Mammary epithelial cell (primary cell): ENCODE measurements at regions of chr7 and their contacts with region 1.

Region 1: GRCh38 chr7:82559193-82559805 is 115.7 kb upstream of the CACNA2D1 start:
- DNase-seq: peak; percentile 40
- H3K4me3 ChIP-seq: no peak overlapping the region
- H3K27ac ChIP-seq: no peak overlapping the region
- H3K4me1 ChIP-seq: peaks cover 2% of the 10 kb centered on the region
- H3K27me3 ChIP-seq: no peaks in the 10 kb centered on the region
- CTCF ChIP-seq: no peak

Region 2: GRCh38 chr7:81704595-81704994 is 854.7 kb before region 1 on chr7:
- CTCF ChIA-PET with region 1: no interaction called
- dilution Hi-C with region 1: no loop called
- in situ Hi-C with region 1: no loop called
- intact Hi-C with region 1: no loop called
- DNase-seq: no peak
- H3K4me3 ChIP-seq: no peak overlapping the region
- H3K27ac ChIP-seq: no peak overlapping the region
- H3K4me1 ChIP-seq: no peaks in the 10 kb centered on the region
- H3K27me3 ChIP-seq: no peaks in the 10 kb centered on the region
- CTCF ChIP-seq: no peak

Region 3: DNA sequence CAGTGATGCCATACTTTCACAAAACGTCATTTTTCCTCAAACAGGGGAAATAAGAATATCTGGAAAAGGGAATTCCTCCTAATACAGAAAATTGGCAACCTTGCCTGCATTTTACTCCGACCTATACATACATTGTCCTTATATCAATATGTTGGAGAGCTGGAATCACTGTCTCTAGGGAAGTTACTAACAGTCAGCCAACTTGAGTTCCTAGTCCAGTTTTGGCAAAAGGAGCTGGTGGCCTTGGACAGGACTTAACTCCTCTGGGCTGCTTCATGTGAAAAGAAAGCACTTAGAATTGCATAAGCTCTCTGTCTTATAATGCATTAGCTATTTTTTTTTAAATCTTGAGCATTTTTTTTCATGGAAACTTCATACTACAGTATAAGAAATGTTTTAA is 615.2 kb before region 1 on chr7:
- CTCF ChIA-PET with region 1: no interaction called
- dilution Hi-C with region 1: no loop called
- in situ Hi-C with region 1: no loop called
- intact Hi-C with region 1: no loop called
- DNase-seq: no peak
- H3K4me3 ChIP-seq: no peak overlapping the region
- H3K27ac ChIP-seq: no peak overlapping the region
- H3K4me1 ChIP-seq: no peaks in the 10 kb centered on the region
- H3K27me3 ChIP-seq: peaks cover 3% of the 10 kb centered on the region
- CTCF ChIP-seq: no peak

Region 4: DNA sequence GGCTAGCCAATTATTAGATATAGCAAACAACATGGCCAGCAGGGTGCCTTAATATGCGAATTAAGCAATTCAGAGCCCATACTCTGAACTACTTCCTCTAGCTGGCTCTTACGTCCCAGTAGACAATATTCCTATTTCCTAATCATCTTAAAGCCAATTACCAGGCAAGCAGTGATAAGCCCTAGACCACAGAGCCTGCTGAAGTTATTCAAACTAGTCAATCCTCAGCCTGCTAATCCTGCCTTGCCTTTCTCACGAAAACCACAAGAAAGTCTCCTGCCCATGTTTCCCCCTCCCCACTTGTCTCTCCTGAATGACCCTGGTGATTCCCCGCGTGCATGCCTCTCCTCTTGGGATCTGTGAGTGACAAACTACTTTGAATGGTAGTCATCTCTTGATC is 28.9 kb before region 1 on chr7:
- CTCF ChIA-PET with region 1: no interaction called
- dilution Hi-C with region 1: no loop called
- in situ Hi-C with region 1: no loop called
- intact Hi-C with region 1: loop called (anchors 2 kb)
- DNase-seq: no peak
- H3K4me3 ChIP-seq: no peak overlapping the region
- H3K27ac ChIP-seq: no peak overlapping the region
- H3K4me1 ChIP-seq: no peaks in the 10 kb centered on the region
- H3K27me3 ChIP-seq: no peaks in the 10 kb centered on the region
- CTCF ChIP-seq: no peak

Region 5: DNA sequence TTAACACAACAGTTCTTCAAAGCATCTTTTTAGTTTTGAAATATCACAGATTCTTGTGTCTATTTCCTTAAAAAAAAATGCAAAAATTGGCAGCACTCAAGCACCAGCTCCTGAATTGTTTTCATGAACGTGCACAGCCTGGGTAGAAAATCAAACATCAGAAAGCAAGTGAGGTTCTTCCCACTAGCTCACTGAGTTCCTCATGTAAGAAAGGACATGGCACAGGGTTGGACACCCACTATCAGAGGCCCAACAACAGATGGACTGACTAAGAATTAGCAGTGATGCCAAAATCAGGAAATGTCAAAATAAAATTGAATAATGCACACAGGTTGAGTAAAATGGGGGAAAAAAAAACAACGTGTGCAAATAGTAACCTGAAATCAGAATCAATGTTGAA is 456.6 kb after region 1 on chr7:
- CTCF ChIA-PET with region 1: no interaction called
- dilution Hi-C with region 1: no loop called
- in situ Hi-C with region 1: no loop called
- intact Hi-C with region 1: no loop called
- DNase-seq: no peak
- H3K4me3 ChIP-seq: no peak overlapping the region
- H3K27ac ChIP-seq: no peak overlapping the region
- H3K4me1 ChIP-seq: no peaks in the 10 kb centered on the region
- H3K27me3 ChIP-seq: no peaks in the 10 kb centered on the region
- CTCF ChIP-seq: no peak

Region 6: DNA sequence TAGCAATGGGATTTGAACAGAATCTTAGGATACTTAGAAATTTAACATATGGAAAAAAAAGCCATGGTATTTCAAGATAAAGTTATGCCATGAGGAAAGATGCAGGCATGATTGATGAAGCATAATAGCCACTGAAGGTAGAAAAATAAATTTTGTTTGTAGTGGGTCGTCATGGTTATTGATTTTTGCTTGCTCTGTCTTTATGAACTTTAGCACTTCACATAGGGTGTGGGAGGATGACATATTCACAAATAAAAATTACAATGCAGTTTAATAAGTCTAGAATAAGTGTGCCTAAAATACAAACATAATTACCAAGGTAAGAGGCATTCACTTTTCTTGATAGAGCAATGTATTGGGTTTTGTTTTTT is 1218.8 kb after region 1 on chr7:
- CTCF ChIA-PET with region 1: no interaction called
- dilution Hi-C with region 1: no loop called
- in situ Hi-C with region 1: no loop called
- intact Hi-C with region 1: no loop called
- DNase-seq: no peak
- H3K4me3 ChIP-seq: no peak overlapping the region
- H3K27ac ChIP-seq: no peak overlapping the region
- H3K4me1 ChIP-seq: no peaks in the 10 kb centered on the region
- H3K27me3 ChIP-seq: no peaks in the 10 kb centered on the region
- CTCF ChIP-seq: no peak